H1 (cell line): ENCODE measurements at regions of chr2 and their contacts with region 1.

Region 1: GRCh38 chr2:26172871-26173775 is at the start of gene GAREM2:
- DNase-seq: no peak
- H3K4me3 ChIP-seq: peak within 1 kb of the TSS; percentile 69 to 97 (median 70)
- H3K27ac ChIP-seq: no peak within 1 kb of the TSS
- H3K4me1 ChIP-seq: peaks cover 4 to 15% (median 6%) of the 10 kb centered on the region in 4 experiments; a peak in 5 of 7 replicates
- H3K27me3 ChIP-seq: peaks cover 0 to 2% (median 0%) of the 10 kb centered on the region in 4 experiments; a peak in 3 of 7 replicates
- CTCF ChIP-seq: no peak
- EP300 ChIP-seq: no peak
- POLR2A ChIP-seq: 0 out of 3 replicates have a peak, but pooled peaks of 1 of the 2 experiments have one; percentile 24
- RAD21 ChIP-seq: no peak
- total RNA-seq, gene GAREM2: 19.9 and 23.0 TPM in 2 replicates

Region 2: GRCh38 chr2:26184555-26185303 is 11.6 kb after region 1 on chr2:
- CTCF ChIA-PET with region 1: interaction called, 23 read pairs
- POLR2A ChIA-PET with region 1: interaction called, 65 read pairs
- DNase-seq: peak; percentile 46 to 88
- H3K4me3 ChIP-seq: peak overlapping the region; percentile 31 to 77 (median 50)
- H3K27ac ChIP-seq: 0 out of 2 replicates have a peak overlapping the region, but pooled peaks have one; percentile 28
- H3K4me1 ChIP-seq: peaks cover 0 to 14% (median 7%) of the 10 kb centered on the region in 4 experiments; a peak in 6 of 7 replicates
- H3K27me3 ChIP-seq: peaks cover 0 to 6% (median 3%) of the 10 kb centered on the region in 4 experiments; a peak in 2 of 7 replicates
- CTCF ChIP-seq: peak in 2 of 3 experiments; percentile 69 to 80; a peak in 3 of 4 replicates
- EP300 ChIP-seq: no peak
- POLR2A ChIP-seq: no peak
- RAD21 ChIP-seq: peak; percentile 23 to 55; a peak in 1 of 4 replicates

Region 3: GRCh38 chr2:26191316-26192159 is 18.4 kb after region 1 on chr2:
- CTCF ChIA-PET with region 1: interaction called, 13 read pairs
- POLR2A ChIA-PET with region 1: interaction called, 65 read pairs
- DNase-seq: peak in 1 of 2 experiments; percentile 51
- H3K4me3 ChIP-seq: no peak overlapping the region
- H3K27ac ChIP-seq: no peak overlapping the region
- H3K4me1 ChIP-seq: no peaks in the 10 kb centered on the region; a peak in 1 of 7 replicates
- H3K27me3 ChIP-seq: no peaks in the 10 kb centered on the region
- CTCF ChIP-seq: peak in 2 of 3 experiments; percentile 7 to 30; a peak in 2 of 4 replicates
- EP300 ChIP-seq: no peak
- POLR2A ChIP-seq: no peak
- RAD21 ChIP-seq: peak; percentile 8 to 22; a peak in 1 of 4 replicates

Region 4: DNA sequence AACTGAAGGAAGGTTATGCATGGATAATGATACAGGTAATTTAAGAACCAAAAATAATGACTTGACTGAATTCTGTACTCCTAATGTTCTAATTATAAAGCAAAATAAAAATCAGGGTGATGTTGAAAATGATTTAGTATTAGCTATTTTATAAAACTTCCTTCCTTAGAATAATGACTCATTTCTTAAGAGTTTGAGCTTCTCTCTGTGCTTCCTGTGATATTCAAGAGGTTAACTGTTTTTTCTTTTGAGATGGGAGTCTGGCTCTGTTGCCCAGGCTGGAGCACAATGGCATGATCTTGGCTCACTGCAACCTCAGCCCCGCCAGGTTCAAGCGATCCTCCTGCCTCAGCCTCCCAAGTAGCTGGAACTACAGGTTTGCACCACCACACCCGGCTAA is 56.5 kb after region 1 on chr2:
- CTCF ChIA-PET with region 1: no interaction called
- POLR2A ChIA-PET with region 1: no interaction called
- DNase-seq: no peak
- H3K4me3 ChIP-seq: no peak overlapping the region
- H3K27ac ChIP-seq: no peak overlapping the region
- H3K4me1 ChIP-seq: no peaks in the 10 kb centered on the region
- H3K27me3 ChIP-seq: no peaks in the 10 kb centered on the region
- CTCF ChIP-seq: no peak
- EP300 ChIP-seq: no peak
- POLR2A ChIP-seq: no peak
- RAD21 ChIP-seq: no peak